RWPE1 (cell line): ENCODE measurements at regions of chr9 and their contacts with region 1.

Region 1: GRCh38 chr9:34591248-34591916 is 1.9 kb upstream of the CNTFR start:
- DNase-seq: peak; percentile 88
- H3K27ac ChIP-seq: no peak overlapping the region
- CTCF ChIP-seq: peak; percentile 99

Region 2: DNA sequence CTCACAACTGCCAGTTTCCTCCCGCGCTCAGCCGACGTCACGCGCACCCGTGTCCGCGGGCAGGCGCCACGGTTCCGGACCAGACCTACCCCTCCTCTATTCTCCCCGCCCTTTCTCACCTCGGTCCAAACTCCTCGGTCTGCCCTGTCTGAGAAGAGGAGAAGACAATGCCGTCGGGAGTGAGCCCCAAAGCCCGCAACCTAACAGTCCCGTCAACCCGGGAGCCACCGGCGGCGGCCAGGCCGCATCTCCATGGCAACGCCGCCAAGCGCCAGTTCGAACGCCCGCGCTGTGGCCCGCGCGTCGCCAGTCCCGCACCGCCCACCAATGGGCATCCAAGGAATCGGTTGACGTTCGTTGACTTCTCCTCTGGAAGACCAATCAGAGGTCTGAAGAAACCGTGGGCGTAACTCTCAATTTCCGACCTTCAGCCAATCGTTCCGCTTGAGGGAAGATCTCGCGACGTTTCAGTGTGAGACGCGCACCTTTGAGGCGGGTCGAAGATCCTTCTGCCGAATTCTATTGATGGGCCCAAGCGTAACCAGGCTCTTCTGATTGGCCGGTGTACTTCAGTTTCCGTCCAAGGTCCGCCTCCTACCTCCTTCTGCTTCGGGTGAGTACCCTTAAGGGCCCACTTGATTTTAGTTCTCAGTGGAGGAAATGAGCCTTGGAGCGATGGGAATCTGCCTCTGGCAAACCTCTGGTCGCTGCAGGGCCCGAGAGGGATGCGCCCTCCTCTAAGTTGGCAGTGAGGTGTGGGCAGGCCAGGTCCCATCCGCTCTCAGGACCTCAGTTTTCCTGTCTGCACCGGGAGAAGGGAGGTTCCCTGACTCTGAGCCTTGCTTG is 262.2 kb before region 1 on chr9 and contains the starts of genes KIF24 and NUDT2:
- CTCF ChIA-PET with region 1: interaction called, 4 read pairs
- POLR2A ChIA-PET with region 1: interaction called, 10 read pairs
- DNase-seq: peak; percentile 99
- H3K27ac ChIP-seq: peak within 1 kb of the TSS; percentile 93
- CTCF ChIP-seq: no peak

Region 3: DNA sequence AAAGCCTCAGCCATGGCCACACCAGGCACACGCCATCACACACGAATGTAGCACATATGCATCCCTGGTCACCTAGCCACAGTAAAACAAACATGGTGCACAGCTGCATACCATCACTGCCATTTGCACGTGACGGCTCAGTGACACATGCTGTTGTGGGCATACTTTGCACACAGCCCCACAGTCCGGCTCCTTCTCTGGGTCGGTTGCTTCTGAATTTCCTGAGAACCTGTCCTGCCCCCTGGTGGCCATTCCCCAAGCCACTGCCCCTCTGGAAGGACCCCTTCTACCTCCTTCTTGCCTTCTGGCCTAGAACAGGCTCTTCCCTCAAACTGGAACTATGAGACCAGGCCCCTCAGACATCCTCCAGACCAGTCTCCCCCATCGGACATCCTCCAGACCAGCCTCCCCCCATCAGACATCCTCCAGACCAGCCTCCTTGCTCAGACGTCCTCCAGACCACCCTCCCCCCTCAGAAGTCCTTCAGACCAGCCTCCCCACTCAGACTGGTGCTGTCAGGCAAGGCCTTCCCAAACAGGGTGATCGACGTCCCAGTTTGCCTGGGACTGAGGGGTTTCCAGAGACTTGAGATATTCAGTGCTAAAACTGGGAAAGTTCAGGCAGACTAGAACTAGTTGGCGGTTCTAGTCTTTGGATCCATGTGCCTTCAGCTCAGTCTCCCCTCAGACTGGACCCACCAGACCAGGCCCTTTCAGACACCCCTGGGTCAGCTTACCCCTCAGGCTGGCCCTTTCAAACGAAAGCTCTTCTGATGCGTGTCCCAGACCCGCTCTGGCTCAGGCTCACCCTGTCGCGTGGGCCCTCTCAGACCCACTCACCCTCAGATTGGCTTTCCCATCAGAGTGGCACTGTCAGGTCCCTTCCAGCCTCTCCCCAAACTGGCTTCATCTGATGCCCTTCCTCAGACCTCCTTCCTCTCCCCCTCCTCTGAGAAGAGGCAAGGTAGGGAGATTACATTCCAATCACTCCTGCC is 44.3 kb before region 1 on chr9:
- CTCF ChIA-PET with region 1: interaction called, 60 read pairs
- POLR2A ChIA-PET with region 1: no interaction called
- DNase-seq: peak; percentile 41
- H3K27ac ChIP-seq: no peak overlapping the region
- CTCF ChIP-seq: peak; percentile 70

Region 4: GRCh38 chr9:34603610-34604231 is 12.3 kb after region 1 on chr9:
- CTCF ChIA-PET with region 1: interaction called, 14 read pairs
- POLR2A ChIA-PET with region 1: no interaction called
- DNase-seq: peak; percentile 87
- H3K27ac ChIP-seq: no peak overlapping the region
- CTCF ChIP-seq: peak; percentile 98